Sciatic nerve (tissue), 2 donors: ENCODE measurements at regions of chr1 and their contacts with region 1.

Region 1: DNA sequence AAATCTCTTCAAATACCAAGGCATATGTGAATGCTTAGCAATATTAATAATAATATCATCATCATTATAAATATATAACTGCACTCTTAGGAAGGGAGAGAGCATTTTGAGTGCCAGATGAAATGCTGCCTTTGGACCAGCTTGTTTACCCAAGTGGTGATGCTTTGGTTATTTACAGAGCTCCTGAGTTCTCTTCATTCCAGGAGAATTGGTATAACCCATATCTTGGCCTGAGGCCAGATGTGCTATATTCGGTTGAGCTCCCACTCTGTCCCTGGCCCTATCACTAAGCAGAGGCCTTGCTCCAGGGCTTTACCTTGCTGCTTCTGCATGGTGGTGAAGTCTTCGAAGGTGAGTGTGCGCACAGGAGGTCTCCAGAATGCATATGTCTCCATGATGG is 89.4 kb downstream of the TBX15 start:
- DNase-seq: no peak
- ATAC-seq: no peak

Region 2: GRCh38 chr1:116987256-116987555 is 1911.5 kb before region 1 on chr1:
- intact Hi-C with region 1: loop called (anchors 5 kb)
- DNase-seq: no peak
- ATAC-seq: no peak